CD4-positive, alpha-beta memory T cell (primary cell): ENCODE measurements at regions of chr15 and their contacts with region 1.

Region 1: GRCh38 chr15:40382580-40383456 is at the start of gene KNSTRN:
- DNase-seq: peak; percentile 90 to 95 (median 91)
- H3K4me3 ChIP-seq: peak within 1 kb of the TSS; percentile 67 to 88
- H3K4me3 Mint-ChIP-seq: peak within 1 kb of the TSS; percentile 92 to 99 (median 96)
- H3K27ac ChIP-seq: peak within 1 kb of the TSS; percentile 69
- H3K27ac Mint-ChIP-seq: peak within 1 kb of the TSS; percentile 71 to 93 (median 88)
- H3K4me1 ChIP-seq: peaks cover 11% of the 10 kb centered on the region
- H3K4me1 Mint-ChIP-seq: peaks cover 10 to 20% (median 16%) of the 10 kb centered on the region in 4 donors
- H3K27me3 ChIP-seq: no peaks in the 10 kb centered on the region
- H3K27me3 Mint-ChIP-seq: peaks cover 0 to 2% of the 10 kb centered on the region in 2 donors
- total RNA-seq, gene KNSTRN: 6.8 to 8.8 TPM

Region 2: GRCh38 chr15:38453971-38454695 is 1928.7 kb before region 1 on chr15 and contains the start of gene FAM98B:
- CTCF ChIA-PET with region 1: interaction called, 3 read pairs
- POLR2A ChIA-PET with region 1: no interaction called
- intact Hi-C with region 1: loop called (anchors 5 kb)
- DNase-seq: peak; percentile 80 to 88 (median 84)
- H3K4me3 ChIP-seq: peak within 1 kb of the TSS; percentile 88 to 95
- H3K4me3 Mint-ChIP-seq: peak within 1 kb of the TSS; percentile 95 to 99 (median 97)
- H3K27ac ChIP-seq: peak within 1 kb of the TSS; percentile 74
- H3K27ac Mint-ChIP-seq: peak within 1 kb of the TSS; percentile 94 to 98 (median 96)
- H3K4me1 ChIP-seq: peaks cover 23% of the 10 kb centered on the region
- H3K4me1 Mint-ChIP-seq: peaks cover 26 to 39% (median 32%) of the 10 kb centered on the region in 4 donors
- H3K27me3 ChIP-seq: no peaks in the 10 kb centered on the region
- H3K27me3 Mint-ChIP-seq: no peaks in the 10 kb centered on the region
- total RNA-seq, gene FAM98B: 22.0 to 26.3 TPM

Region 3: GRCh38 chr15:40323239-40323952 is 59.4 kb before region 1 on chr15 and contains the start of gene INAFM2:
- CTCF ChIA-PET with region 1: interaction called, 3 read pairs
- POLR2A ChIA-PET with region 1: no interaction called
- intact Hi-C with region 1: loop called (anchors 1 kb)
- DNase-seq: peak; percentile 88 to 90 (median 89)
- H3K4me3 ChIP-seq: peak within 1 kb of the TSS in 1 of 2 donors; percentile 56
- H3K4me3 Mint-ChIP-seq: peak within 1 kb of the TSS; percentile 79 to 89 (median 86)
- H3K27ac ChIP-seq: peak within 1 kb of the TSS; percentile 29
- H3K27ac Mint-ChIP-seq: peak within 1 kb of the TSS; percentile 36 to 93 (median 88)
- H3K4me1 ChIP-seq: peaks cover 22% of the 10 kb centered on the region
- H3K4me1 Mint-ChIP-seq: peaks cover 16 to 35% (median 25%) of the 10 kb centered on the region in 4 donors
- H3K27me3 ChIP-seq: no peaks in the 10 kb centered on the region
- H3K27me3 Mint-ChIP-seq: peaks cover 0 to 7% of the 10 kb centered on the region in 2 donors
- total RNA-seq, gene INAFM2: 7.2 to 7.5 TPM

Region 4: DNA sequence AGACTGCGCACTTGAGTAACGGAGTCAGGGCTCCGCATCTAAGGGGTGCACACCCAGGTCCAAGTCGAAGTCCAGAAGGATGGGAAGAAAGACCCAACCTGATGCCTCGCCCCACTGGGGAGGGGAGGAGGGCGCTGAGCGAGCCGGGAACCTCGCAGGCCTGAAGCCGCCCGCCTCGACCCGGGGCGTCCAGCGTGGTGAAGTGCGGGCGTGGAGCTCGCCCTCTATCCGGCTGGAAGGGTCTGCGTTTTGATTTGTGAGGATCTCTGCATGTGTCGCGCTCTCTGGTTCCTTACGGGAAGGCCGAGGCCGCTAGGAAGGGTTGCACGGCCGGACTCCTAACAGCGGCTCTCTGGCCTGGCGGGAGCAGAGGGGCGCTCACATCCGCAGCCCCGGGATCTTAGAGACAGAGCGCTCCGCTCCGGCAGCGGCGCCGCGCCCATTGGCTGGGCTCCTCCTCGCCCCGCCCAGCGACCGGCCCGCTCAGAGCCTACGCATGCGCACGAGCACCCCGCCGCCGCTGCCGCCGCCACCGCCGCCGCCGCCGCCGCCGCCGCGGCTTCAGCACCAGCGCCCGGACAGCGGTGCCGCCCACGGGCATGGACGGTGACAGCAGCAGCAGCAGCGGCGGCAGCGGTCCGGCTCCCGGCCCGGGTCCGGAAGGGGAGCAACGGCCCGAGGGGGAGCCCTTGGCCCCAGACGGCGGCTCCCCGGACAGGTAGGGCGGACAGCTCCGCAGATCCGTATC is 24.9 kb before region 1 on chr15 and contains the start of gene DISP2:
- CTCF ChIA-PET with region 1: no interaction called
- POLR2A ChIA-PET with region 1: no interaction called
- intact Hi-C with region 1: loop called (anchors 1 kb)
- DNase-seq: peak; percentile 85 to 96 (median 90)
- H3K4me3 ChIP-seq: peak within 1 kb of the TSS; percentile 29 to 58
- H3K4me3 Mint-ChIP-seq: peak within 1 kb of the TSS; percentile 80 to 87 (median 83)
- H3K27ac ChIP-seq: no peak within 1 kb of the TSS
- H3K27ac Mint-ChIP-seq: peak within 1 kb of the TSS in 2 of 7 donors; percentile 68 to 82
- H3K4me1 ChIP-seq: peaks cover 13% of the 10 kb centered on the region
- H3K4me1 Mint-ChIP-seq: peaks cover 5 to 21% (median 7%) of the 10 kb centered on the region in 4 donors
- H3K27me3 ChIP-seq: no peaks in the 10 kb centered on the region
- H3K27me3 Mint-ChIP-seq: peaks cover 0 to 4% of the 10 kb centered on the region in 2 donors
- total RNA-seq, gene DISP2: 0.03 to 0.23 TPM

Region 5: GRCh38 chr15:40405501-40406381 is 22.9 kb after region 1 on chr15 and contains the start of gene IVD:
- CTCF ChIA-PET with region 1: no interaction called
- POLR2A ChIA-PET with region 1: interaction called, 25 read pairs
- intact Hi-C with region 1: loop called (anchors 1 kb)
- DNase-seq: peak; percentile 78 to 82 (median 80)
- H3K4me3 ChIP-seq: peak within 1 kb of the TSS; percentile 42 to 63
- H3K4me3 Mint-ChIP-seq: peak within 1 kb of the TSS; percentile 82 to 98 (median 90)
- H3K27ac ChIP-seq: peak within 1 kb of the TSS; percentile 61
- H3K27ac Mint-ChIP-seq: peak within 1 kb of the TSS; percentile 62 to 92 (median 86)
- H3K4me1 ChIP-seq: peaks cover 25% of the 10 kb centered on the region
- H3K4me1 Mint-ChIP-seq: peaks cover 24 to 35% (median 30%) of the 10 kb centered on the region in 4 donors
- H3K27me3 ChIP-seq: no peaks in the 10 kb centered on the region
- H3K27me3 Mint-ChIP-seq: no peaks in the 10 kb centered on the region
- total RNA-seq, gene IVD: 56.4 to 62.2 TPM

Region 6: GRCh38 chr15:40613080-40613479 is 230.3 kb after region 1 on chr15:
- CTCF ChIA-PET with region 1: no interaction called
- POLR2A ChIA-PET with region 1: no interaction called
- intact Hi-C with region 1: no loop called
- DNase-seq: no peak
- H3K4me3 ChIP-seq: no peak overlapping the region
- H3K4me3 Mint-ChIP-seq: no peak overlapping the region
- H3K27ac ChIP-seq: no peak overlapping the region
- H3K27ac Mint-ChIP-seq: no peak overlapping the region
- H3K4me1 ChIP-seq: no peaks in the 10 kb centered on the region
- H3K4me1 Mint-ChIP-seq: no peaks in the 10 kb centered on the region
- H3K27me3 ChIP-seq: no peaks in the 10 kb centered on the region
- H3K27me3 Mint-ChIP-seq: no peaks in the 10 kb centered on the region